Tibial artery (tissue), 4 donors: ENCODE measurements at regions of chr19 and their contacts with region 1.

Region 1: GRCh38 chr19:37738371-37738770 is 18.8 kb upstream of the ZNF607 start:
- DNase-seq: no peak
- H3K4me3 ChIP-seq: no peak overlapping the region
- H3K27ac ChIP-seq: no peak overlapping the region
- H3K4me1 ChIP-seq: no peaks in the 10 kb centered on the region
- H3K27me3 ChIP-seq: no peaks in the 10 kb centered on the region
- CTCF ChIP-seq: no peak

Region 2: GRCh38 chr19:36032251-36033104 is 1705.9 kb before region 1 on chr19 and contains the start of gene CLIP3:
- intact Hi-C with region 1: loop called (anchors 5 kb)
- DNase-seq: peak; percentile 62 to 86
- H3K4me3 ChIP-seq: peak within 1 kb of the TSS; percentile 69 to 84
- H3K27ac ChIP-seq: peak within 1 kb of the TSS; percentile 79 to 85
- H3K4me1 ChIP-seq: peaks cover 0 to 19% (median 12%) of the 10 kb centered on the region in 4 donors
- H3K27me3 ChIP-seq: no peaks in the 10 kb centered on the region
- CTCF ChIP-seq: peak; percentile 20 to 33

Region 3: GRCh38 chr19:37699127-37699526 is 39.2 kb before region 1 on chr19:
- intact Hi-C with region 1: no loop called
- DNase-seq: no peak
- H3K4me3 ChIP-seq: no peak overlapping the region
- H3K27ac ChIP-seq: no peak overlapping the region
- H3K4me1 ChIP-seq: no peaks in the 10 kb centered on the region
- H3K27me3 ChIP-seq: no peaks in the 10 kb centered on the region
- CTCF ChIP-seq: no peak